ENCODE measurements at regions of chr17 and their contacts with region 1.

Region 1: DNA sequence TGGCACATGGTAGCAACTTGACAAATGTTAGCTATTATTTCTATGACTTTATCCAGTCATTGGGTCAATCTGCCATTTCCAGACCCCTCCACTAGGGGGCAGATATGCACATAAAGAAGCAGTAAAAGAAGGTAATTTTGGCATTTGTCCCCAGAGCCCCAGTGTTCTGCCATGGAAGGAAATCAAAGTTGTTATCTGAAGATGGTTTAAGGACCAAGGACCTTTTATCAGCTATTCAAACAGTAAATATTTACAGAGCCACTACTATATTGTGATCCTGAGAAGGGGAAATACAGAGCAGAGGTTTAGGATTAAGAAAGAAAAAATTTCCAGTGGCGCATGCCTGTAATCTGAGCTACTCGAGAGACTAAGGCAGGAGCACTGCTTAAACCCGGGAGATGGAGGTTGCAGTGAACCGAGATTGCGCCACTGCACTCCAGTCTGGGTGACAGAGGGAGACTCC is 20.0 kb downstream of the TRAF4 start:
- DNase-seq: peak; percentile 83
- ATAC-seq: peak; percentile 85
- H3K4me3 ChIP-seq: no peak overlapping the region
- H3K4me3 Mint-ChIP-seq: no peak overlapping the region
- H3K27ac ChIP-seq: no peak overlapping the region
- H3K27ac Mint-ChIP-seq: no peak overlapping the region
- H3K4me1 ChIP-seq: peaks cover 0 to 8% of the 10 kb centered on the region in 2 donors
- H3K4me1 Mint-ChIP-seq: peaks cover 11% of the 10 kb centered on the region
- H3K27me3 ChIP-seq: no peaks in the 10 kb centered on the region
- H3K27me3 Mint-ChIP-seq: no peaks in the 10 kb centered on the region
- CTCF ChIP-seq: peak; percentile 94

Region 2: GRCh38 chr17:28726226-28727130 is 37.4 kb before region 1 on chr17 and contains the start of gene TLCD1:
- CTCF ChIA-PET with region 1: interaction called, 112 read pairs
- POLR2A ChIA-PET with region 1: interaction called, 21 read pairs
- intact Hi-C with region 1: loop called (anchors 1 kb)
- DNase-seq: peak; percentile 93
- ATAC-seq: peak; percentile 46
- H3K4me3 ChIP-seq: peak within 1 kb of the TSS; percentile 40 to 77 (median 66)
- H3K4me3 Mint-ChIP-seq: peak within 1 kb of the TSS; percentile 98
- H3K27ac ChIP-seq: peak within 1 kb of the TSS; percentile 90 to 97
- H3K27ac Mint-ChIP-seq: peak within 1 kb of the TSS; percentile 100
- H3K4me1 ChIP-seq: peaks cover 38 to 65% of the 10 kb centered on the region in 2 donors
- H3K4me1 Mint-ChIP-seq: peaks cover 67% of the 10 kb centered on the region
- H3K27me3 ChIP-seq: no peaks in the 10 kb centered on the region
- H3K27me3 Mint-ChIP-seq: no peaks in the 10 kb centered on the region
- CTCF ChIP-seq: peak; percentile 99
- total RNA-seq, gene TLCD1: 3.1 and 3.4 TPM in 2 replicates

Region 3: GRCh38 chr17:28812091-28812747 is 48.4 kb after region 1 on chr17:
- CTCF ChIA-PET with region 1: interaction called, 18 read pairs
- POLR2A ChIA-PET with region 1: interaction called, 10 read pairs
- intact Hi-C with region 1: no loop called
- DNase-seq: peak; percentile 95
- ATAC-seq: peak; percentile 99
- H3K4me3 ChIP-seq: peak overlapping the region; percentile 48 to 92 (median 77)
- H3K4me3 Mint-ChIP-seq: peak overlapping the region; percentile 92
- H3K27ac ChIP-seq: peak overlapping the region; percentile 87
- H3K27ac Mint-ChIP-seq: peak overlapping the region; percentile 92
- H3K4me1 ChIP-seq: peaks cover 12 to 16% of the 10 kb centered on the region in 2 donors
- H3K4me1 Mint-ChIP-seq: peaks cover 34% of the 10 kb centered on the region
- H3K27me3 ChIP-seq: no peaks in the 10 kb centered on the region
- H3K27me3 Mint-ChIP-seq: no peaks in the 10 kb centered on the region
- CTCF ChIP-seq: no peak

Region 4: DNA sequence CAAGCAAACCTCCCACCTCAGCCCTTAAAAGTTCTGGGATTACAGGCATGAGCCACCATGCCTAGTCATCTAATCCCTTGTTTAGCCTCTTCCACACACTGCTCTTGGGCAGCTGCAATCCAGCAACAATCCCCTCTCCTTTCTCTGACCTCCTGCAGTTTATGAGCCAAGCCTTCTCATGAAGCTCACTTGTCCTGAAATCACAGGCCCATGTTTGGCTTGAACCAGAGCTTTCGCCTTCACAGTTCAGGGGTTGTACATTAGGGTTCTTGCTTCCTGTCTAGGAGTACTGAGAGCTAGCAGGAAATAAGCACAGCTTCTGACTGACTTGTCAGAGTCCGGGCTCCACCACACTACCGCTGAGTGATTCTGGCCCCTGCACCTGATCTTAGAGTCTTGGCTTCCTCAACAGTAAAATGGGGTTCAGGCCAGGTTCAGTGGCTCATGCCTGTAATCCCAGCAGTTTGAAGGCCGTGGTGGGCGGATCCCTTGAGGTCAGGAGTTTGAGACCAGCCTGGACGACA is 107.3 kb after region 1 on chr17:
- CTCF ChIA-PET with region 1: interaction called, 18 read pairs
- POLR2A ChIA-PET with region 1: interaction called, 3 read pairs
- intact Hi-C with region 1: no loop called
- DNase-seq: peak; percentile 68
- ATAC-seq: peak; percentile 99
- H3K4me3 ChIP-seq: no peak overlapping the region
- H3K4me3 Mint-ChIP-seq: peak overlapping the region; percentile 68
- H3K27ac ChIP-seq: peak overlapping the region; percentile 65 to 90
- H3K27ac Mint-ChIP-seq: peak overlapping the region; percentile 97
- H3K4me1 ChIP-seq: peaks cover 13 to 23% of the 10 kb centered on the region in 2 donors
- H3K4me1 Mint-ChIP-seq: peaks cover 23% of the 10 kb centered on the region
- H3K27me3 ChIP-seq: no peaks in the 10 kb centered on the region
- H3K27me3 Mint-ChIP-seq: no peaks in the 10 kb centered on the region
- CTCF ChIP-seq: no peak

Region 5: DNA sequence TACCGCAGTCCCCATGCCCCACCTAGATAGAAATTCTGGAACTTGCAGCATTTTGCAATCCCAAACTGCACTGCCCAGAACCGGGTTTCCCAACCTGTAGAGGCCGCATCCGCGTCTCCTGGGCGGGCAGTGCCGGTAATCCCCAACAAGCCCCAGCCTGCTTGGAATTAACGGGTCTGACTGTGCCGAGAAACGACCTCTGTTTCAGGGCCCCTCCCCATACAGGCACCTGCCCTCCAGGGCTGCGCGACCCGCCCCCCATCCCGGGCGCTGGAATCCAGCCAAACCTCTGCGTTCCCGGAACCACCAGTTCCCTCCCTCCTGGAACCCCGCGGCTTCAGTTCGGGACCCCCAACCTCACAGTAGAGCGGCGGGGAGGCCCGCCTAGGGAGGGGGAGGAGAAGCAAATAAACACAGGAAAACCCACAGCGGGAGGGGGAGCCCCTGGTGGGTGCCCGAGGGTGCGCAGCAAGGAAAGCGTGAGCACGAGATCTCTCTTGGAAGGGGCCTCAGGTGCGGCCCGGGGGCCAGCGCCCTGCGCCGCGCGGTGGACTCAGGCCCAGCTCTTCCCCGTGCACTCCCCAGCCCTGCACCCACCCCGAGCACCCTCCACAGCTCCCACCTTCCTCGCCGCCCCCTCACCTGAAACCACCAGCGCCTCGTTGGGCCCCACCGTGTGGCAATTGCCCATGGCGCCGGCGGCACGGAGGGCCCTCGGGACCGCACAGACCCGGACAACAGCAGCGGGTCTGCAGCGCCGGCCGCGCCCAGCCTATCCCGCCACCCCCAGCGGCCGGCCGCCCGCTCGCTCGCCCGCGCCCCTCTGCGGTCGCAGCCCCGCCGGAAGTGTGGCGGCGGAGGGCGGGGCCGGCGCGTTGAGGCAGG is 133.3 kb after region 1 on chr17 and contains the start of gene FLOT2:
- CTCF ChIA-PET with region 1: interaction called, 137 read pairs
- POLR2A ChIA-PET with region 1: interaction called, 6 read pairs
- intact Hi-C with region 1: loop called (anchors 1 kb)
- DNase-seq: peak; percentile 76
- ATAC-seq: peak; percentile 60
- H3K4me3 ChIP-seq: peak within 1 kb of the TSS; percentile 71 to 95 (median 82)
- H3K4me3 Mint-ChIP-seq: peak within 1 kb of the TSS; percentile 97
- H3K27ac ChIP-seq: peak within 1 kb of the TSS; percentile 82 to 97
- H3K27ac Mint-ChIP-seq: peak within 1 kb of the TSS; percentile 99
- H3K4me1 ChIP-seq: peaks cover 62 to 73% of the 10 kb centered on the region in 2 donors
- H3K4me1 Mint-ChIP-seq: peaks cover 68% of the 10 kb centered on the region
- H3K27me3 ChIP-seq: no peaks in the 10 kb centered on the region
- H3K27me3 Mint-ChIP-seq: no peaks in the 10 kb centered on the region
- CTCF ChIP-seq: peak; percentile 57
- total RNA-seq, gene FLOT2: 251 and 270 TPM in 2 replicates

Region 6: DNA sequence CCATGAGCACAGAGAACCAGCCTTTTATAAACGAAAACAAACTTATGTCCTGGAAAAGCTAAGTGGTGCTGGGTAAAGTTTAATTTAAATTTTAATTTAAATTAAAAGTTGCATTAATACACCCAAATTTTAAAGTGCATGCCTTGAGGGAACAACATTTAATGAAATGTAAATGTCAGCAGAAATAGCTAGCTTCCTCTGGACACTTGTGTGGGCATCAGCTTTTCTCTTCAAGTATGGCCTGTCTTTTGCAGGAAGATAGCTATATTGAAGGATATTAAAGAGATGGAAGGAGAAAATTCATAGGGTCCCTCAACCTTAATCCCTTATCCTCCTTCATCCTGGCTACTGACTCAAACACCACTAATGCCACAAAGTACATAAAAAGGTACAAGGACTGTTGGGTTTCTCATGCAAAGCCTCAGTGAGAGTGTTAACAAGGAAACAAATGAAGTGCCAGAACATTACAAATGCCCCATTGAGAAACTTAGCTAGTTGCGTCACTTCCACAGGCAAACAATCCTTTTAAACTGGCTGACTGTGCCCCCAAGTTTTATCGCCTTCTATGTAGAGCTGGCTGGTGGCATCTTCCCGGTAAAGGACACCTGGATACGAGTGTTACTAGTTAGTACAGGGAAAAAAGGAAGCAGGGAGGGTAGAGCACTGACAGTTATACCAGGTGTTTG is 173.4 kb after region 1 on chr17:
- CTCF ChIA-PET with region 1: interaction called, 10 read pairs
- POLR2A ChIA-PET with region 1: no interaction called
- intact Hi-C with region 1: no loop called
- DNase-seq: no peak
- ATAC-seq: no peak
- H3K4me3 ChIP-seq: no peak overlapping the region
- H3K4me3 Mint-ChIP-seq: no peak overlapping the region
- H3K27ac ChIP-seq: peak overlapping the region in 1 of 2 donors; percentile 27
- H3K27ac Mint-ChIP-seq: no peak overlapping the region
- H3K4me1 ChIP-seq: peaks cover 27 to 35% of the 10 kb centered on the region in 2 donors
- H3K4me1 Mint-ChIP-seq: peaks cover 75% of the 10 kb centered on the region
- H3K27me3 ChIP-seq: no peaks in the 10 kb centered on the region
- H3K27me3 Mint-ChIP-seq: no peaks in the 10 kb centered on the region
- CTCF ChIP-seq: no peak

Region 7: DNA sequence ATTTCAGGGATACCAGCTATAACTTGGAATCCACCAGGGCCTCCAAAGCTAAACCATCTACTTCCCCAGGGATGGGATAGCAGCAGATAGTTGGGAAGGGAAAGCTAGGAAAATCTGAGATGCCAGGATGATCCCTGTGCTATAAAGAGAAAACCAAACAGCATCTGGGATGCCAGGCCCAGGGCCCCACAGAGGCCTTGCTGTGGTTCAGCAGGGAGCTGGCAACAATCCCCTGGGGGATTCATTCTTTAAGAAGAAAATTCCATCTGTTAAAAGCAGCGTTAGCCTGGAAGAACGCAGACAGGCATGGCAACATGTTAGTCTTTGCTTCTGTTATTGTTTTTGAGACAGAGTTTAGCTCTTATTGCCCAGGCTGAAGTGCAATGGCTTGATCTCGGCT is 399.7 kb after region 1 on chr17:
- CTCF ChIA-PET with region 1: no interaction called
- POLR2A ChIA-PET with region 1: no interaction called
- intact Hi-C with region 1: no loop called
- DNase-seq: no peak
- ATAC-seq: no peak
- H3K4me3 ChIP-seq: no peak overlapping the region
- H3K4me3 Mint-ChIP-seq: no peak overlapping the region
- H3K27ac ChIP-seq: no peak overlapping the region
- H3K27ac Mint-ChIP-seq: no peak overlapping the region
- H3K4me1 ChIP-seq: peaks cover 0 to 3% of the 10 kb centered on the region in 2 donors
- H3K4me1 Mint-ChIP-seq: peaks cover 1% of the 10 kb centered on the region
- H3K27me3 ChIP-seq: no peaks in the 10 kb centered on the region
- H3K27me3 Mint-ChIP-seq: no peaks in the 10 kb centered on the region
- CTCF ChIP-seq: no peak

Measured in B cell (primary cell).